Activated CD4-positive, alpha-beta memory T cell treated with anti-CD3 and anti-CD28 coated beads, Interleukin-2, amount 10 ng/mL, durations not matched to agents 7 days and 5 days (primary cell): ENCODE measurements at regions of chr4 and their contacts with region 1.

Region 1: DNA sequence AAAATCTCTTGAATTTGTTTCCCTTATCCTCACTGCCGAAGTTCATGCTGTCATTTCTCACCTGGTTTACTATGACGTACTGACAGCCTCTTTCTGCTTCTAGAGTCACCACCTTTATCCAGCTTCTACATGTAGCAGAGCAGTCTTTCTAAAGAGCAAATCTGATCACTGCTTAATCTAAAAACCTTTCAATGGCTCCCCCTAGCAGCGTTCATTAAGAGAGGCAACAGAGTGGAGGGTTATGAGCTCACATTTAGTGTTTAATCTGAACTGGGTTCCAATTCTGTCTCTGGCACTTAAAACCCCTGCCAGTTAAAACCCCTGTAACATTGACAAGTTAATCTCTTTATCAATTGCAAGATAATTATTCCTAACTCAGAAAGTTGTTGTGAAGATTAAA is 4.4 kb downstream of the RBPJ start:
- DNase-seq: peak; percentile 28
- H3K4me3 Mint-ChIP-seq: peak overlapping the region; percentile 52
- H3K27ac Mint-ChIP-seq: peak overlapping the region; percentile 65
- H3K4me1 Mint-ChIP-seq: peaks cover 51% of the 10 kb centered on the region
- H3K27me3 Mint-ChIP-seq: no peaks in the 10 kb centered on the region

Region 2: DNA sequence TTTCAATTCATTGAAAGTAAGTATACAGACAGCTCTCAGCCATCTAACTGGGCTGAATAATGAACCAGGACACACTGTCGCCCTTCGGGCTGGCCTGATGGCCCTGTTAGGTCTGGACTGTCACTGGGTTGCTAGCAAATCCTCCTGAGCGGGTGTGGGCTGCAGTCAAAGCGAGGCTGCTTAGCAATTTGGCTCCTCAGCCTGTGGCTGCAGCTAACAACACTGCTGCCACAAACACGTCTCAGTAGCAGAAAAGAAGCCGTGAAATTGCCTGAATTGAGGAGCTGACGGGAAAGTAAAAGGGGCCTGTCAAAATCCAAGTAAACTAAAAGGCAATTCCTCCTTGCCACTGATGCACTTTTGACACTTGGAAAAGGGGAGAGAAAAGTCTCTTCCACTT is 338.4 kb before region 1 on chr4:
- CTCF ChIA-PET with region 1: interaction called, 39 read pairs
- POLR2A ChIA-PET with region 1: no interaction called
- DNase-seq: no peak
- H3K4me3 Mint-ChIP-seq: no peak overlapping the region
- H3K27ac Mint-ChIP-seq: no peak overlapping the region
- H3K4me1 Mint-ChIP-seq: peaks cover 16% of the 10 kb centered on the region
- H3K27me3 Mint-ChIP-seq: no peaks in the 10 kb centered on the region

Region 3: DNA sequence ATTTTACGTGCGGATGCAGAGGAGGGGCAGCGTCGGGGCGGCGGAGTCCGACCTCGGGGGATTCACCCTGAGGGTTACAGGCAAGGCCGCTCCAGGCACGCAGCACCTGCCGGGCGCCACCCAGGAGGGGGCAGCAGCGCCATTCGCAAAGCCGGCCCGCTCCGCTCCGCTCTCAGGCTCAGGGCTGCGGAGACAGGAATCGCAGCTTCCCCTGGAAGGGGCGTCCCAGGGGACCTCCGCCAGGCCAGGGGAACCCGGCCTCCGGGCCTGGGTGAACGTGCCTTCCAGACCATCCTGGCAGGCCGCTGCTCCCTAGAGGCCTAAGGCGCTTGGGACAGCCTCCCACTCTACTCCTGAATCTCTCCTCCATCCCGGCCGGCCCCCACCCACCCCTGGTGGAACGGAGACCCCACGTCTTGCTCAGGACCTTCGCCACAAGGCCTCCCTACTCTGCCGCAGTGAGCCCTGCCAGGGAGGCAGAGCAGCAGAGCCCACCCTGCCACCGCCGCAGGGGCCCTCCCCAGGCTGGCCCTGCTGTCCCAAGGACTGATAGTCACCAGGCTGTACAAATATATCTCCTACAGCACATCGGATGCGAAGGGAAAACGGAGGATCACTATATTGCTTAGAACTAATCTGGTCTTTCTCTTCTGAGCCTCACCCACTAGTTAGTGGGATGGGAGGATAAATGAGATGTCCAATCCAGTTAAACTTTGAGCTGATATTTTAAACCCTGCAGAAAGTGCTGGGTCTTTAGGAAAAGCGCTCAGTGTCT is 296.2 kb before region 1 on chr4:
- CTCF ChIA-PET with region 1: interaction called, 28 read pairs
- POLR2A ChIA-PET with region 1: interaction called, 3 read pairs
- DNase-seq: peak; percentile 76
- H3K4me3 Mint-ChIP-seq: no peak overlapping the region
- H3K27ac Mint-ChIP-seq: no peak overlapping the region
- H3K4me1 Mint-ChIP-seq: peaks cover 16% of the 10 kb centered on the region
- H3K27me3 Mint-ChIP-seq: no peaks in the 10 kb centered on the region

Region 4: DNA sequence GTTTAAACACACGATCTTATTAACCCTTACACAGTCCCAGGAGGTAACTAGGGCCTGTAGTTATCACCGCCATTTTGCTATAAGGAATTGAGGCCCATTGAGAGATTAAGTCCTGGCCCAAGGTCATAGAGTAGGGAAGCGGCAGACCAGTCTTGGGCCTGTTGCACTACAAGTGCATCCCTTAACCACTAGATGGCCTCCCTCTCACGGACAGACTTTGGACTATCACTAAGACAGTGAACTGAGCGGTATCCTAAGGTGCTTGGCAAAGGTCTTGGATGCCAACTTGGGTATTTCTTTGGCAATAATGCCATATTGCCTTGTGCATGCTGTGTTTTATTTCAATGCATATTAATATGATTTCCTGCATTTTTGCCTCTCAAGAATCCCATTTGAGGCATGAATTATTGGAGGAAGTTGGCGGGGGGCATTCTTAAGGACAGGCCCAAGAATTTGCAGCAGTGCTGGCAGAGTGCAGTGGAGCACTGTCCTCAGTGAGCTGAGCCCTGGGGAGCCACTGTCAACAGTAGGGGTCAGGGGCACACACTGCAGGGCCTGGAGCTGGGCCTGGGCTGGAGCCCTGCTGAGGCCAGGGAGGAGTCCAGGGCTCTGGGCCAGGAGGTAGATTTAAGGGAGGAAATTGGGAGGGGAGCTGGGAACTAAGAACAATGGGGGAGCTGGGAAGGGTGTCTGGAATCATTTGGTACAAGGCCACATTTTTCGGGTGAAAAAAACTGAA is 263.8 kb before region 1 on chr4:
- CTCF ChIA-PET with region 1: interaction called, 13 read pairs
- POLR2A ChIA-PET with region 1: interaction called, 8 read pairs
- DNase-seq: peak; percentile 52
- H3K4me3 Mint-ChIP-seq: no peak overlapping the region
- H3K27ac Mint-ChIP-seq: no peak overlapping the region
- H3K4me1 Mint-ChIP-seq: peaks cover 26% of the 10 kb centered on the region
- H3K27me3 Mint-ChIP-seq: peaks cover 1% of the 10 kb centered on the region

Region 5: GRCh38 chr4:26069218-26069617 is 256.0 kb before region 1 on chr4:
- CTCF ChIA-PET with region 1: interaction called, 25 read pairs
- POLR2A ChIA-PET with region 1: interaction called, 65 read pairs
- DNase-seq: no peak
- H3K4me3 Mint-ChIP-seq: no peak overlapping the region
- H3K27ac Mint-ChIP-seq: no peak overlapping the region
- H3K4me1 Mint-ChIP-seq: peaks cover 30% of the 10 kb centered on the region
- H3K27me3 Mint-ChIP-seq: peaks cover 2% of the 10 kb centered on the region

Region 6: GRCh38 chr4:26076000-26076587 is 249.1 kb before region 1 on chr4:
- CTCF ChIA-PET with region 1: interaction called, 25 read pairs
- POLR2A ChIA-PET with region 1: interaction called, 65 read pairs
- DNase-seq: peak; percentile 76
- H3K4me3 Mint-ChIP-seq: peak overlapping the region; percentile 25
- H3K27ac Mint-ChIP-seq: peak overlapping the region; percentile 83
- H3K4me1 Mint-ChIP-seq: peaks cover 76% of the 10 kb centered on the region
- H3K27me3 Mint-ChIP-seq: no peaks in the 10 kb centered on the region

Region 7: DNA sequence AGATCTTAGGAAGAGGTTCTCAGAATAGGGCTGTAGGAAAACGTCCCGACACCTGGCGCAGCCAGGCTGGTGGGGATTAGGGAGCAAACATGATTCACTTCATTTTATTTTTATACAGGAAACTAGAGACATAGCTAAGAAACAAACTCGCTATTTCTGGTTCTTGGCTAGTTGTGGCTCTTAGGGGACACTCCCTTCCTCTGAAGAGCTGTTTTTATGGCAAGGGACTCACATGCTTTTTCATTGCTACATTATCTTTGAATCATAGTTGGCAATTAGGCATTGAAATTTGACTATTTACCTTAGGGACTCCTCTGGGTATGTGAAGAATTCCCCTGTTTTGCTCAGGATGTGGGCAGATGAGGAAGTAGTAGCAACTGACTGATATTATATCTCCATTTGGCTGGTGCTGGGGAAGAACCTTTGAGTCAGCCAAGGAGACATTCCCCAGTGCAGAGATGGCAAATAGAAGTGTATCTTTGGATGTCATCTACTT is 236.7 kb before region 1 on chr4:
- CTCF ChIA-PET with region 1: interaction called, 10 read pairs
- POLR2A ChIA-PET with region 1: interaction called, 25 read pairs
- DNase-seq: no peak
- H3K4me3 Mint-ChIP-seq: peak overlapping the region; percentile 41
- H3K27ac Mint-ChIP-seq: peak overlapping the region; percentile 78
- H3K4me1 Mint-ChIP-seq: peaks cover 64% of the 10 kb centered on the region
- H3K27me3 Mint-ChIP-seq: no peaks in the 10 kb centered on the region